IMR-90 (cell line): ENCODE measurements at regions of chr14 and their contacts with region 1.

Region 1: DNA sequence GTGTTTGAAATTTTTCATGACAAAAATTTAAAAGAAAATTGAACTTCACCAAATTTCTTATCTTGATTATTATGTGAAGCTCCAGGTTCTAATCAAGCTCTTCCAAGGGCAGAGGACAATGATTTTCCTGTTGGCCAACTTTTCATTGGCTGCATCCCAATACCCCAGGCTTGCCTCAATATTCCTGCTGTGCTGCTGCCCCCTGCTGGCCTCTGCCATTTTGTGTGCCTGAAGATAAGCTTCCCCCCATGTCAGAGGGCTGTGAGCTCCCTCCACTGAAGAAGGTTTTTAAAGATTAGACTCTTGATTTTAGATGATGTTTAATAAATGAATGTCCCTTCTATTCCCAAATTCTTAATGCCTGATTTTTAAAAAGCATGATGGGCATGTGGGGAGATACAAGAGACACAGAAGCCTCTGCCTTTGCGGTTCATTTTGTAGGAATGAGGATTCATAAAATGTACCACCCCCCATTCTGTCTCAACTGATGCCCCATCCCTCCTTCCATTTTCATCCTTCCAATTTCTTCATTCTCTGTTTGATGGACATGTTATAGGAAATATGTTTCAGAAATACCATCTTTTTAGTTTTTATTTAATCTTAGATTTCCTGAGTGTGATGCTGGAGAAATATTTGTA is 76.7 kb upstream of the RGS6 start:
- DNase-seq: peak; percentile 68
- ATAC-seq: peak; percentile 75
- H3K4me3 ChIP-seq: no peak overlapping the region
- H3K27ac ChIP-seq: no peak overlapping the region
- H3K4me1 ChIP-seq: no peaks in the 10 kb centered on the region
- H3K27me3 ChIP-seq: no peaks in the 10 kb centered on the region; the same call in 1 of the 2 replicates
- CTCF ChIP-seq: peak; percentile 84
- POLR2A ChIP-seq: no peak
- RAD21 ChIP-seq: peak; percentile 86

Region 2: DNA sequence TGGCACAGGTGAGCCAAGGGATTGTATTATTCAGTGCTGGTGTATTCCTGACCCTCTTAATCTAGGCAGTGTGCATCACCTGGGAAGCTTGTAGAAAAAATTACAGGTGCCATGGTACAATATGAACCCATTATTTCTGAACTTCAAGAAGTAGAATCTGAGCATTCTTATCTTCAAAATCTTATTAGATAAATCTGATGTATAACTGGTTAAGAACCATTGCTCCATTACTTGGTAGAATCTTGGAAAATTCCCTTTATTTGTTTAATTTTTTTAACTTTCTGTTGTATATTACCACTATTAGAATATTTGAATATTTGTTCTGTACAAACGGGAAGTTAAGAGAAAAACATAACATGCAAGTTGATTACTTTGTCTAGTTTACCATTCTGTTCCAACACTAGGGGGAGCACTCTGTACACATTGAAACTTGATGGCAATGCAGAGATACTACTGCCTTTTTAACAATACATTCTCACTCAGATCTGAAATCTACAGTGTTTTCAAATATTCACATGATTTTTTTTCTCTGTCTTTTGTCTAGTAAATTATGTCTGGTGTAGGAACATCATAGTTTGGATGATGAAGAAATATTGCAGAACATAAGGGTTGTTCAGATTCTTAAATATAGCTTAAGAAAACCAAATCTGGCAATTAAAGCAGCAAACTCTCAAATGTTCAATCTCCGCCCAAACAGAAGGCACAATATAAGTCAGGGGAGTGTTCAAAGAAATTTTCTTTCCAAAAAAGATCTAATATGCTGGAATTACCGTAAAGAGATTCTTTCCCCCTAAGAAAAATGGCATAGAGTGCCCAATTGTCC is 751.6 kb before region 1 on chr14:
- CTCF ChIA-PET with region 1: no interaction called
- POLR2A ChIA-PET with region 1: no interaction called
- dilution Hi-C with region 1: no loop called
- in situ Hi-C with region 1: no loop called
- intact Hi-C with region 1: loop called (anchors 10 kb)
- DNase-seq: peak; percentile 80
- ATAC-seq: peak; percentile 83
- H3K4me3 ChIP-seq: no peak overlapping the region
- H3K27ac ChIP-seq: no peak overlapping the region
- H3K4me1 ChIP-seq: peaks cover 7% of the 10 kb centered on the region
- H3K27me3 ChIP-seq: no peaks in the 10 kb centered on the region
- CTCF ChIP-seq: peak; percentile 83
- POLR2A ChIP-seq: no peak
- RAD21 ChIP-seq: peak; percentile 80

Region 3: GRCh38 chr14:71362920-71363584 is 492.5 kb before region 1 on chr14:
- CTCF ChIA-PET with region 1: no interaction called
- POLR2A ChIA-PET with region 1: no interaction called
- dilution Hi-C with region 1: no loop called
- in situ Hi-C with region 1: no loop called
- intact Hi-C with region 1: no loop called
- DNase-seq: peak; percentile 73
- ATAC-seq: no peak
- H3K4me3 ChIP-seq: no peak overlapping the region
- H3K27ac ChIP-seq: peak overlapping the region; percentile 17; the same call in 1 of the 2 replicates
- H3K4me1 ChIP-seq: peaks cover 19% of the 10 kb centered on the region
- H3K27me3 ChIP-seq: no peaks in the 10 kb centered on the region
- CTCF ChIP-seq: no peak
- POLR2A ChIP-seq: no peak
- RAD21 ChIP-seq: no peak

Region 4: GRCh38 chr14:71380271-71380670 is 475.2 kb before region 1 on chr14:
- CTCF ChIA-PET with region 1: no interaction called
- POLR2A ChIA-PET with region 1: no interaction called
- dilution Hi-C with region 1: no loop called
- in situ Hi-C with region 1: no loop called
- intact Hi-C with region 1: loop called (anchors 10 kb)
- DNase-seq: peak; percentile 47
- ATAC-seq: peak; percentile 82
- H3K4me3 ChIP-seq: no peak overlapping the region
- H3K27ac ChIP-seq: peak overlapping the region; percentile 63
- H3K4me1 ChIP-seq: peaks cover 7% of the 10 kb centered on the region; the same call in 1 of the 2 replicates
- H3K27me3 ChIP-seq: no peaks in the 10 kb centered on the region
- CTCF ChIP-seq: no peak
- POLR2A ChIP-seq: no peak
- RAD21 ChIP-seq: no peak

Region 5: DNA sequence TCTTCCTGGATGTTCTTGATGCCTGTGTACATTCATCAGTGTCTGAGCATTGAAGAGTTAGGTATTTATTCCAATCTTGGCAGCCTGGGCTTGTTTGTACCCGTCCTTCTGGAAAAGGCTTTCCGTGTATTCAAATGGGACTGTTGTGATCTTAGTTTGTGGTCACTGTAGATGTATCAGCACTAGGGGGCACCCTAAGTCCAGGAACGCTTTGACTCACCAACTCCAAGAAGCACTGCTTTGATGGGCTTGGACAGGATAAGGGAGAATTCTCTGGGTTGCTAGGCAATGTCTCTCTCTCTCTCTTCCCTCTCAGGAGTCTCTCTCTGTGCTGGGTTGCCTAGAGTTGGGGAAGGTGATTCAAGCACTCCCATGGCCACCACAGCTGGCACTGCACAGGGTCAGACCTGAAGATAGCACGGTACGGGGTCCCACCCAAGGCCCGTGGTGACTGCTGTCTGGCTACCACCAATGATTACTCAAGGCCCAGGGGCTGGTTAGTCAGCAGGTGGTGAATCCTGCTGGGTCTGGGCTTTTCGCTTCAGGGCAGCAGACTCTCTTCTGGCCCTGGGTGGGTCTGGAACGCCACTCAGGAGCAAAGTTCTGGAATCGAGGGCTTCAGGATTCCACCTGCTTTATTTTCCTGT is 134.4 kb before region 1 on chr14:
- CTCF ChIA-PET with region 1: interaction called, 5 read pairs
- POLR2A ChIA-PET with region 1: no interaction called
- dilution Hi-C with region 1: no loop called
- in situ Hi-C with region 1: no loop called
- intact Hi-C with region 1: loop called (anchors 1 kb)
- DNase-seq: peak; percentile 85
- ATAC-seq: peak; percentile 92
- H3K4me3 ChIP-seq: no peak overlapping the region
- H3K27ac ChIP-seq: no peak overlapping the region
- H3K4me1 ChIP-seq: peaks cover 13% of the 10 kb centered on the region
- H3K27me3 ChIP-seq: no peaks in the 10 kb centered on the region
- CTCF ChIP-seq: peak; percentile 84
- POLR2A ChIP-seq: 0 out of 2 replicates have a peak, but pooled peaks have one; percentile 42
- RAD21 ChIP-seq: peak; percentile 89

Region 6: GRCh38 chr14:71803524-71804260 is 51.8 kb before region 1 on chr14:
- CTCF ChIA-PET with region 1: interaction called, 7 read pairs
- POLR2A ChIA-PET with region 1: no interaction called
- dilution Hi-C with region 1: no loop called
- in situ Hi-C with region 1: no loop called
- intact Hi-C with region 1: loop called (anchors 1 kb)
- DNase-seq: peak; percentile 68
- ATAC-seq: no peak; the same call in 1 of the 2 replicates
- H3K4me3 ChIP-seq: no peak overlapping the region
- H3K27ac ChIP-seq: peak overlapping the region; percentile 92
- H3K4me1 ChIP-seq: peaks cover 24% of the 10 kb centered on the region
- H3K27me3 ChIP-seq: no peaks in the 10 kb centered on the region
- CTCF ChIP-seq: no peak
- POLR2A ChIP-seq: no peak
- RAD21 ChIP-seq: no peak